ENCODE measurements at regions of chr4 and their contacts with region 1.

Region 1: DNA sequence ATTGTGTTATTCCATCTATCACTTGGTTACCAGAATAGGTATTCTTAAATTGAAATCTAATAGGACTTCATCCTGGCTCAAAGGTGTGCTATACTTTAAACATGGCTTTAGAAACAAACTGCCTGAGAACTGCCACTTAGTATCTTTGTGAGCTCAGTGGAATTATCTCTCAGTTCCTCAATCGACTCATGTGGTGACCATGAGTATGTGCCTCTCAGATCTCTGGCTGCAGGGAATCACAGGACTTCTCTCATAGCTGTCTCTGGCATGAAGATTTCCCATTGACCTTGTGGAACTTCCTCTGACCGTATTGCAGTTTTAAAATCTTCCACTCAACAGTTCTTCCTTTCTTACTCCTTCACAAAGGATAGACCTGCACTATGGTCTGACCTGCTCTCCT is 681.9 kb upstream of the BOD1L1 start:
- DNase-seq: no peak
- ATAC-seq: peak; percentile 56
- H3K4me3 ChIP-seq: no peak overlapping the region
- H3K27ac ChIP-seq: no peak overlapping the region
- H3K4me1 ChIP-seq: no peaks in the 10 kb centered on the region
- H3K27me3 ChIP-seq: no peaks in the 10 kb centered on the region
- CTCF ChIP-seq: no peak
- EP300 ChIP-seq: no peak
- POLR2A ChIP-seq: no peak
- RAD21 ChIP-seq: no peak

Region 2: DNA sequence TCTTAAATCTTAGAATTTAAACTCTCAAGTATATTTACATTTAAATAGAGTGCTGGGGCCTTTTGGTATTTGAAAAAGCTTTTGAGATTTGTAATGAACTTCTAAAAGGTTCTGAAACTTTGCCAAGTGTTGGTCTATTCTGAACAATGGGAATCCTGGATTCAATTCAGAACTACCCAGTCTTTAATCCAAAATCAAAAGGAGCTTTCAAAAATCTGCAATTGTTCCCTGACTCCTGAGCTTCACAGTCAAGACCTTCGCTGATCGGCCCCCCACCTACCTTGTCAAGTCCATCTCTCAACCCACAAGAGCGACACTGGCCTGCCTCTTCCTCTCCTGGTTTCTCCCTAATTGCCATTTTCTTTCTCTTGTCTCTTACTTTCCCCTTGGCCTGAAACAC is 15.8 kb before region 1 on chr4:
- CTCF ChIA-PET with region 1: interaction called, 3 read pairs
- POLR2A ChIA-PET with region 1: interaction called, 11 read pairs
- RAD21 ChIA-PET with region 1: no interaction called
- SMC1A ChIA-PET with region 1: interaction called, 4 read pairs
- in situ Hi-C with region 1: no loop called
- intact Hi-C with region 1: no loop called
- DNase-seq: no peak
- ATAC-seq: no peak
- H3K4me3 ChIP-seq: no peak overlapping the region
- H3K27ac ChIP-seq: no peak overlapping the region
- H3K4me1 ChIP-seq: no peaks in the 10 kb centered on the region
- H3K27me3 ChIP-seq: no peaks in the 10 kb centered on the region
- CTCF ChIP-seq: no peak
- EP300 ChIP-seq: no peak
- POLR2A ChIP-seq: no peak
- RAD21 ChIP-seq: no peak

Region 3: DNA sequence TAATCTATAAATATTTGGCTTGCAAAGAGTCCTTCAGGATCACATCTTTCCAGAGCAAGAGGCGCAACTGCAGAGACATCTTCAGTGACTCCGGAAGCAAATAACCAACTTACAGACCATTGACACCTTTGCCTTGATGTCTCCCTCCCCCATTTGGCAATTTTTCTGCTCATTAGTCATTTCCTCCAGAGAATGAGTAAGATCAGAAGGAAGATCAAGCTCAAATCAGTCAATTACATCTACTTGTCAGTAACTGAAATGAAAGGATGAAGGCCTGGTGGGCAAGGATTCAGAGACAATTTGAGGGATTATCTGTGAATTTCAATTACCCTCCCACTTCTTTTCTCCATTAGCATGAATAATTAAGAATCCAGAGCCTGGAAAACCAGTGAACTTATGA is 27.2 kb after region 1 on chr4:
- CTCF ChIA-PET with region 1: no interaction called
- POLR2A ChIA-PET with region 1: no interaction called
- RAD21 ChIA-PET with region 1: no interaction called
- SMC1A ChIA-PET with region 1: no interaction called
- in situ Hi-C with region 1: no loop called
- intact Hi-C with region 1: no loop called
- DNase-seq: no peak
- ATAC-seq: no peak
- H3K4me3 ChIP-seq: no peak overlapping the region
- H3K27ac ChIP-seq: no peak overlapping the region
- H3K4me1 ChIP-seq: no peaks in the 10 kb centered on the region
- H3K27me3 ChIP-seq: no peaks in the 10 kb centered on the region
- CTCF ChIP-seq: no peak
- EP300 ChIP-seq: no peak
- POLR2A ChIP-seq: no peak
- RAD21 ChIP-seq: no peak

Measured in GM12878 (cell line).